ENCODE measurements at regions of chr12 and their contacts with region 1.

Region 1: DNA sequence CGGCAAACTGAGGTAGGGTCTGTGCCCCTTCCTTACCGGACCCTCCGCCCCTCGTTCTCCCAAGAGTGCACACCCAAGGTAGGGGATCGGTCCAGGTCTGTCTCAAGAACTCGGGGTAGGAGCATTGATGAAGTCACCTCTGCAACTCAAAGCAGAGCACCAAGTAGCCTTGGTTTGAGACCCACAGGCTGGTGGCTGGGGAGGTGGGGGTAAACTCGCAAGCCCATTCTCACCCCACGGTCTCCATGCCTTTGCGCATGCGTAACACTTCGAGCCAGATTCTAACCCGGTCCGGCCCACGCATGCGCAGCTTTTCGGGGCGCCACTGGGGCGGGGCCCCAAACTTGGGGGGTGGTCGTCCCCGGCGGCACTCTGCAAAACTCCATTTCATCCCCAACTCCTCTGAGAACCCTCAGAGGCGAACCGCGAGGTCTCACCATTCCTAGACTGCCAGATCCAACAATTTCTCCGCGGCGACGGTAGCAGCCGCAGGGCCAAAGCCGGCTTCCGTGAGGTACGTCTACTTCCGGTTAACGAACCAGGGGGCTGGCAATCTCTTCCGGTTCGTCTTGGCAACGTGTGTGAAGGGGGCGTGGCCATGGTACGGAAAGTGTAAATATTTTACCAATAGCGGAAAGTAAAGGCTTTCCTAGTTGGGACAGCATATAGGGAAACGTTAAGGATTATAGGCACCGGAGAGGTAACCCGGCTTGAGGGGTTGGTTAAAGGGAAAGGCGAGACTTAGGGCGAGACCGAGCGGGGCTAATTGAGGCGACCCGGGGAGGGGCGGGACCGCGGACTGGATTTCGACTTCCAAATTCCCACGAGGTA is at the start of gene MCRS1:
- DNase-seq: peak; percentile 91 to 94
- H3K4me3 ChIP-seq: peak within 1 kb of the TSS; percentile 63
- H3K4me3 Mint-ChIP-seq: peak within 1 kb of the TSS; percentile 99
- H3K27ac Mint-ChIP-seq: peak within 1 kb of the TSS; percentile 99
- H3K4me1 ChIP-seq: no peaks in the 10 kb centered on the region
- H3K4me1 Mint-ChIP-seq: peaks cover 9% of the 10 kb centered on the region
- H3K27me3 ChIP-seq: no peaks in the 10 kb centered on the region
- H3K27me3 Mint-ChIP-seq: no peaks in the 10 kb centered on the region
- CTCF ChIP-seq: no peak
- total RNA-seq, gene MCRS1: 115 and 122 TPM in 2 replicates

Region 2: GRCh38 chr12:49553512-49554088 is 14.2 kb before region 1 on chr12:
- CTCF ChIA-PET with region 1: interaction called, 11 read pairs
- POLR2A ChIA-PET with region 1: no interaction called
- intact Hi-C with region 1: no loop called
- DNase-seq: peak in 1 of 2 experiments; percentile 65
- H3K4me3 ChIP-seq: no peak overlapping the region
- H3K4me3 Mint-ChIP-seq: no peak overlapping the region
- H3K27ac Mint-ChIP-seq: no peak overlapping the region
- H3K4me1 ChIP-seq: no peaks in the 10 kb centered on the region
- H3K4me1 Mint-ChIP-seq: no peaks in the 10 kb centered on the region
- H3K27me3 ChIP-seq: no peaks in the 10 kb centered on the region
- H3K27me3 Mint-ChIP-seq: no peaks in the 10 kb centered on the region
- CTCF ChIP-seq: peak; percentile 81 to 93

Region 3: GRCh38 chr12:49636979-49637755 is 69.3 kb after region 1 on chr12:
- CTCF ChIA-PET with region 1: no interaction called
- POLR2A ChIA-PET with region 1: no interaction called
- intact Hi-C with region 1: no loop called
- DNase-seq: peak; percentile 65 to 66
- H3K4me3 ChIP-seq: no peak overlapping the region
- H3K4me3 Mint-ChIP-seq: no peak overlapping the region
- H3K27ac Mint-ChIP-seq: no peak overlapping the region
- H3K4me1 ChIP-seq: peaks cover 6% of the 10 kb centered on the region; the same call in 1 of the 2 replicates
- H3K4me1 Mint-ChIP-seq: peaks cover 7% of the 10 kb centered on the region
- H3K27me3 ChIP-seq: no peaks in the 10 kb centered on the region
- H3K27me3 Mint-ChIP-seq: no peaks in the 10 kb centered on the region
- CTCF ChIP-seq: peak; percentile 58 to 70

Measured in Caco-2 (cell line).